ENCODE measurements at regions of chr1 and their contacts with region 1.

Region 1: GRCh38 chr1:171984850-171985485 is 143.7 kb downstream of the DNM3 start:
- DNase-seq: peak; percentile 8
- ATAC-seq: peak; percentile 58
- H3K4me3 Mint-ChIP-seq: no peak overlapping the region
- H3K27ac Mint-ChIP-seq: no peak overlapping the region
- H3K4me1 Mint-ChIP-seq: no peaks in the 10 kb centered on the region
- H3K27me3 Mint-ChIP-seq: no peaks in the 10 kb centered on the region

Region 2: DNA sequence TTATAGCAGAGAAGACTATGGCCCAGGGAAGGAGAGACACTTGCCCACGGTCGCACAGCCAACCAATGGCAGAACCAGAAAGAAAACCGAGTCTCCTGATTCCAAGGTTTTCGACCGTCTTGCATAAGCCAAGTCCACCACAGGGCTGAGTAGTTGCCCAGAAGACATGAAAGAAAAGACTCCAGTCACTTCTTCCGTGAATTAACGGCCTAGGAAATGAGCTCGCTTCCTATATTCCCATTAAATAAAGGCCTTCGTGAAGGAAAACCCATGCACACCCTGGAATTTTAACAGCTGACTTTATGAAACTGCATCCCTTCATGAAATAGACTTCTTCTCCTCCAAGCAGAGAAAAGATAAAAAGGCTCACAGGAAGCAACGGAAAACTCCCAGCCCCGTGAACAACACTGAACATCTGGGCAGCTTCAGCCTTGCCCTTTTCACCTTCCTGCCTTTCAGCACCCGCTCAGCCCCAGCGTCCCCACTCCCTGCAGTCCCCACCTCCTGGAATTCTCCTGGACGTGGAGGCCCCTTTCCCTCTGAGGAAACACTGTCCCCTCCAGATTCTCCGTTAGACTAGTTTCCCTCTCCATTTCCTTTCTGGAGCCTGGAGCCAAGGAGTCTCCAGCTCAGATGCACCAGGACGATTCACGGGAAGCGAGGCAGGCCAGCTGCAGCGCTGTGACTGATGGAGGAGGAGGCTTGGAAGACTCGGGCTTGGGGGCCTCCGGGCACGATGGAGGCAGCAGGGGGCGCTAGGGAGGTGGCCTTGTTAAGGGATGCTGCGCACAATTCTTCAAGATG is 329.8 kb before region 1 on chr1:
- CTCF ChIA-PET with region 1: interaction called, 4 read pairs
- POLR2A ChIA-PET with region 1: no interaction called
- intact Hi-C with region 1: loop called in 1 of 2 experiments (anchors 1 kb)
- DNase-seq: peak; percentile 90
- ATAC-seq: peak; percentile 93
- H3K4me3 Mint-ChIP-seq: no peak overlapping the region
- H3K27ac Mint-ChIP-seq: no peak overlapping the region
- H3K4me1 Mint-ChIP-seq: peaks cover 8% of the 10 kb centered on the region
- H3K27me3 Mint-ChIP-seq: peaks cover 9% of the 10 kb centered on the region

Region 3: DNA sequence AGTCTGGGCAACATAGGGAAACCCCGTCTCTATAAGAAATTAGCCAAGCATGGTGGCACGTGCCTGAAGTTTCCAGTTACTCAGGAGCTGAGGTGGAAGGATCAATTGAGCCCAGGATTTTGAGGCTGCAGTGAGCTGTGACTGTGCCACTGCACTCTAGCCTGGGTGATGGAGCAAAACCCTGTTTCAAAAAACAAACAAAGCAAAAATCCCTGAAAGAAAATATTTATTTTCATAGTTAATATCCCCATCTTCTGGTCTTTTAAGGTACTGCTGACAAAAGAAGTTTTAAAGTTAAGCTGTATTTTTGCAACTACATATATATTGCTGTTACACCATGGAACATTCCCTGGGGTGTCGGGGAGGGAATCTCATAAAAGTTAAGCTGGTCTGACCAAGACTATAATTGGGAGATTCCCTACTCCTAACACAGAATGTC is 269.1 kb before region 1 on chr1:
- CTCF ChIA-PET with region 1: interaction called, 3 read pairs
- POLR2A ChIA-PET with region 1: interaction called, 3 read pairs
- intact Hi-C with region 1: loop called in 1 of 2 experiments (anchors 10 kb)
- DNase-seq: no peak
- ATAC-seq: no peak
- H3K4me3 Mint-ChIP-seq: no peak overlapping the region
- H3K27ac Mint-ChIP-seq: no peak overlapping the region
- H3K4me1 Mint-ChIP-seq: peaks cover 3% of the 10 kb centered on the region
- H3K27me3 Mint-ChIP-seq: no peaks in the 10 kb centered on the region

Region 4: DNA sequence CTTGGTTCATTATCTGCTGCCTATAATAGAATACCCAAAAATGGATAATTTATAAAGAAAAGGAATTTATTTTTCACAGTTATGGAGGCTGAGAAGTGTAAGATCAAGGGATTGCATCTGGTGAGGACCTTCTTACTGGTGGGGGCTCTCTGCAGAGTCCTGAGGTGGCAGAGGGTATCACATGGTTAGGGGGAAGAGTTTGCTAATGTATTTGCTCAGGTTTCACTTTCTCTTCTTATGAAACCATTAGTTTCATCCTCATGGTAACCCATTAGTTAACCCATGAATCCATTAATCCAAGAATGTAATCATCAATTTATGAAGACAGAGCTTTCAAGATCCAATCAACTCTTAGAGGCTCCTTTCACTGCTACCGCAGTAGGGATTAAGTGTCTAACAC is 23.1 kb before region 1 on chr1:
- CTCF ChIA-PET with region 1: interaction called, 6 read pairs
- POLR2A ChIA-PET with region 1: no interaction called
- intact Hi-C with region 1: loop called in 1 of 2 experiments (anchors 2 kb)
- DNase-seq: no peak
- ATAC-seq: no peak
- H3K4me3 Mint-ChIP-seq: no peak overlapping the region
- H3K27ac Mint-ChIP-seq: no peak overlapping the region
- H3K4me1 Mint-ChIP-seq: no peaks in the 10 kb centered on the region
- H3K27me3 Mint-ChIP-seq: no peaks in the 10 kb centered on the region

Region 5: DNA sequence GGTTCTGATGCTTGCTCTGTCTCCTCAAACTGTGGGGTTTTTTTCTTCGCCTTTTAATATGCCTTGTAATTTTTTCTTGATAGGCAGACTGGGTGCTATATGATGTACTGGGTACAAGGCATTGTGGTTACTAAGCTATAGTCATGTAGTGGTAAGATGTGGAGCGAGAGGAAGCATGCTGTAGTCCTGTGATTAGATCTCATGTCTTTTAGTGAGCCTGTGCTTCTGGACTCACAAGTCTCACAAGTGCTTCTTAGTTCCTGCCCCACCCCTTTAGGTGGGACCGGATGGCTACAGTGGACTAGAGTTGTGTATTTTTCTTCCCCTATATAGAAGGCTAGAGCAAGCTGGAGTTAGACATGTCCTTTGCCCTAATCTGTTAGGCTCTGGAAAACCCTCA is 35.0 kb after region 1 on chr1:
- CTCF ChIA-PET with region 1: no interaction called
- POLR2A ChIA-PET with region 1: no interaction called
- intact Hi-C with region 1: no loop called
- DNase-seq: no peak
- ATAC-seq: no peak
- H3K4me3 Mint-ChIP-seq: no peak overlapping the region
- H3K27ac Mint-ChIP-seq: no peak overlapping the region
- H3K4me1 Mint-ChIP-seq: no peaks in the 10 kb centered on the region
- H3K27me3 Mint-ChIP-seq: peaks cover 8% of the 10 kb centered on the region

Region 6: DNA sequence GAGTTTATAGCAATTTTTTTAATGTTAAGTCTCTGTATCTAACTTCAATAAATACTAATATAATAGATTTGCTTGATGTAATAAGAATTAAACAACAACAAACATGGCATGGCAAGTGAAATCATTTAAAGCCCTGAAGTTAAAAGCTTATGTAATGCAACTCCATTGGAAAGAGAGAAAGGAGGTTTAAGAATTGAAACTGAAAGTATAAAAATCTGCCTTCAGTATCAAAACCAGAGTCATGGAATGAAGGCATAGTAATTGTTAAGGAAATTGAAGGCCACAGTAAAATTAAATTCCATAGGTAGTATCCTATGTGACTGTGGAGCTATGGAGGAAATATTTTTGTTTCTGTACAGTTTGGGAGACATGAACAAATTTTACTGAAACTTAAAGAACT is 1547.3 kb after region 1 on chr1:
- CTCF ChIA-PET with region 1: no interaction called
- POLR2A ChIA-PET with region 1: no interaction called
- intact Hi-C with region 1: no loop called
- DNase-seq: no peak
- ATAC-seq: no peak
- H3K4me3 Mint-ChIP-seq: no peak overlapping the region
- H3K27ac Mint-ChIP-seq: no peak overlapping the region
- H3K4me1 Mint-ChIP-seq: peaks cover 13% of the 10 kb centered on the region
- H3K27me3 Mint-ChIP-seq: no peaks in the 10 kb centered on the region